Thyroid gland (tissue), 4 donors: ENCODE measurements at regions of chr1 and their contacts with region 1.

Region 1: DNA sequence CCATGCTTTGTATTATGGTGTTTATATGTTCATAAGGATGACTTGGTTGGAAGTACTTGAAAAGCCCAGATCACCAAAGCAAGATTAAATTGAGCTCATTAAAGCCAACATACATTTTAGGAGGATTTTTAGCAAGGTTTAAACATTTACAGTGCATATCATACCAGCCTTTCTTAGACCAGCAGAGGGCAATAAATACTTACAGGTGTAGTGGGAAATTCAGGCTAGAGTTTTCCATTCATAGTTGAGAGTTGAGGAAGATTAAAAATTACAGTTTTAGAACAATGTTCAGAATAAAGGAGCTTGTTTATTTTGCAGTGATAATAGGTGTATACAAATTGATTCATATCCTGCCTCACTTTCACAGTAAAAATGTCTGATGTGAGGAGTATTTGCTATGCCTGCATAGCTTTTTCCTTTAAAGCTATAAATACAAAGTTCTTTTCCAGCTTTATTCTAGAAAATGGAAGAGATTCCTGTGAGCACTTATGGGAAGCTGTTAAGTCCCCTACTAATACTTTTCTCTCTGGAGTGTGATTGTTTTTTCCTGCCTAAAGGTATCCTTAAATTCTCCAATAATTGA is 35.3 kb downstream of the DTL start:
- DNase-seq: no peak
- H3K4me3 ChIP-seq: no peak overlapping the region
- H3K27ac ChIP-seq: no peak overlapping the region
- H3K4me1 ChIP-seq: no peaks in the 10 kb centered on the region
- H3K27me3 ChIP-seq: no peaks in the 10 kb centered on the region
- CTCF ChIP-seq: peak; percentile 43 to 91 (median 76)
- POLR2A ChIP-seq: no peak

Region 2: DNA sequence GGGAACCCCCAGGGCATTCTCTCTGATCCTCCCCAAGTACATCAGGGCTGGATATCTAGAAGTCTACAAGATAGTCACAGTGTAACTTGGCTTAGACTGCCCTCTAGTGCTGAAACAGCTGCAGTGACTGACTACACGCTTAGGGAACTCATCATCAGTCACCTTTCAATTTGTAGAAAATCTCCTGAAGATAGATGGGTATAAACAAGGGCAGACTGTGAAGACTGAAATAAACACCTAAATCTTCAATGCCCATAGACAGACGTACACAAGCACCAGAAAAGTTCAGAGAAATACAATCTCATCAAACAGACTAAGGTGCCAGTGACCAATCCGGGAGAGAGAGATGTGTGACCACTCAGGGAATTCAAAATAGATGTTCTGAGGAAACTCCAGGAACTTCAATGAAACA is 297.3 kb after region 1 on chr1:
- intact Hi-C with region 1: loop called (anchors 2 kb)
- DNase-seq: peak; percentile 60 to 62
- H3K4me3 ChIP-seq: no peak overlapping the region
- H3K27ac ChIP-seq: no peak overlapping the region
- H3K4me1 ChIP-seq: no peaks in the 10 kb centered on the region
- H3K27me3 ChIP-seq: no peaks in the 10 kb centered on the region
- CTCF ChIP-seq: peak; percentile 48 to 93 (median 86)
- POLR2A ChIP-seq: no peak